Activated CD4-positive, alpha-beta T cell treated with anti-CD3 and anti-CD28 coated beads for 36 hours (primary cell): ENCODE measurements at regions of chr10 and their contacts with region 1.

Region 1: GRCh38 chr10:86899670-86900276 is 57.6 kb downstream of the MMRN2 start:
- DNase-seq: peak; percentile 60
- ATAC-seq: peak; percentile 44
- H3K4me3 Mint-ChIP-seq: no peak overlapping the region
- H3K27ac Mint-ChIP-seq: no peak overlapping the region
- H3K4me1 Mint-ChIP-seq: peaks cover 3% of the 10 kb centered on the region
- H3K27me3 Mint-ChIP-seq: no peaks in the 10 kb centered on the region

Region 2: DNA sequence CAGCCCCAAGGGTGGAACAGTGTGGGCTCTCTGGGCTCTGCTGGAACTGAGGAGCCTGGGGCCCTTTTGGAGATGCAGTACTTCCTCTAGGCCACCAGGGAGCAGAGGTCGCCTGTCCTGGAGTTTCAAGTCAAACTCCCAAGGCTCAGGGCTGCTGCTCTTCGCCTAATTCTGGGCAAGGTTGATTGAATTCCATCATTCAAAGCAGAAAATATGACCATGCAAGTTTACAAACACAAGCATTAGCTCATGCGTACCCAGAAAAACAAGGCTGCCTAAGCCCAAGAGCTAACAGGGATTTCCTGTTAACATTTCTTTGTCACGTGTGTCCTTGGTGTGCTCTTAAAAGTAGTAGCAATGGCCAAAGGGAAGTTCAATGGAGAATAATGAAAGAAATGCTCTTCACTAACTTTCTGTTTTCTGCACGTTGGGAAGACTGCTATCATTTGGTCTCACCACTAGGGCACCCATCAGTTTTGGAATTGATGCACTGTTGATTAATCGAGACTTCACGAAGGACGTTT is 211.3 kb before region 1 on chr10:
- CTCF ChIA-PET with region 1: interaction called, 28 read pairs
- POLR2A ChIA-PET with region 1: no interaction called
- intact Hi-C with region 1: loop called (anchors 1 kb)
- DNase-seq: peak; percentile 72
- ATAC-seq: peak; percentile 94
- H3K4me3 Mint-ChIP-seq: no peak overlapping the region
- H3K27ac Mint-ChIP-seq: no peak overlapping the region
- H3K4me1 Mint-ChIP-seq: no peaks in the 10 kb centered on the region
- H3K27me3 Mint-ChIP-seq: no peaks in the 10 kb centered on the region

Region 3: GRCh38 chr10:86693721-86694369 is 205.9 kb before region 1 on chr10:
- CTCF ChIA-PET with region 1: interaction called, 28 read pairs
- POLR2A ChIA-PET with region 1: no interaction called
- intact Hi-C with region 1: loop called in 1 of 2 experiments (anchors 1 kb)
- DNase-seq: peak; percentile 60
- ATAC-seq: peak; percentile 55
- H3K4me3 Mint-ChIP-seq: no peak overlapping the region
- H3K27ac Mint-ChIP-seq: no peak overlapping the region
- H3K4me1 Mint-ChIP-seq: no peaks in the 10 kb centered on the region
- H3K27me3 Mint-ChIP-seq: no peaks in the 10 kb centered on the region

Region 4: DNA sequence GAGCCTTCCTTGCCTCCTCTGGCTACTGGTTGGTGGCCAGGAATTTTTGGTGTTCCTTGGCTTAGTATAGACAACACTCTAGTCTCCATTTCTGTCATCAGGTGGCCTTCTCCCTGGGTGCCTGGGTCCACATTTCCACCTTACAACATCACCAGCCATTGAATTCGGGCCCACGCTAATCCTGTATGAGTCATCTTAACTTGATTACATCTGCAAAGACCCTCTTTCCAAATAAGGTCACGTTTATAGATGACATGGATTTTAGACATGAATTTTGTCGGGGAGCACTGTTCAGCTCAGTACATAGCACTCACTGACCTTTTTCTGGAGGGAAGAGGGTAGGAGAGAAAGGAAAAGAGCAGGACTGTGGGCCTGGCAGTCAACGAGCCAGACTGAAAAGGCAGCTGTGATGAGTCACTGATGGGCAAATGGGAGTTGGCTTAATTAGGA is 18.3 kb after region 1 on chr10:
- CTCF ChIA-PET with region 1: interaction called, 11 read pairs
- POLR2A ChIA-PET with region 1: no interaction called
- intact Hi-C with region 1: no loop called
- DNase-seq: no peak
- ATAC-seq: no peak
- H3K4me3 Mint-ChIP-seq: no peak overlapping the region
- H3K27ac Mint-ChIP-seq: no peak overlapping the region
- H3K4me1 Mint-ChIP-seq: no peaks in the 10 kb centered on the region
- H3K27me3 Mint-ChIP-seq: no peaks in the 10 kb centered on the region

Region 5: GRCh38 chr10:87094373-87095235 is 194.8 kb after region 1 on chr10 and contains the starts of genes GLUD1 and SHLD2:
- CTCF ChIA-PET with region 1: no interaction called
- POLR2A ChIA-PET with region 1: no interaction called
- intact Hi-C with region 1: no loop called
- DNase-seq: peak; percentile 94
- ATAC-seq: peak; percentile 80
- H3K4me3 Mint-ChIP-seq: peak within 1 kb of the TSS; percentile 85
- H3K27ac Mint-ChIP-seq: peak within 1 kb of the TSS; percentile 91
- H3K4me1 Mint-ChIP-seq: peaks cover 34% of the 10 kb centered on the region
- H3K27me3 Mint-ChIP-seq: no peaks in the 10 kb centered on the region
- total RNA-seq, gene GLUD1: 98.4 to 125 TPM
- total RNA-seq, gene SHLD2: 29.7 to 29.9 TPM